Tibial artery (tissue), 4 donors: ENCODE measurements at regions of chr3 and their contacts with region 1.

Region 1: GRCh38 chr3:107235928-107236315 is 141.3 kb upstream of the CCDC54 start:
- DNase-seq: no peak
- H3K4me3 ChIP-seq: peak overlapping the region; percentile 50 to 52
- H3K27ac ChIP-seq: peak overlapping the region; percentile 60
- H3K4me1 ChIP-seq: peaks cover 3 to 27% (median 6%) of the 10 kb centered on the region in 4 donors
- H3K27me3 ChIP-seq: no peaks in the 10 kb centered on the region
- CTCF ChIP-seq: peak; percentile 86 to 95

Region 2: GRCh38 chr3:107429320-107430181 is 193.6 kb after region 1 on chr3:
- intact Hi-C with region 1: loop called (anchors 2 kb)
- DNase-seq: peak; percentile 69 to 89
- H3K4me3 ChIP-seq: peak overlapping the region; percentile 66 to 72
- H3K27ac ChIP-seq: peak overlapping the region; percentile 95
- H3K4me1 ChIP-seq: peaks cover 0 to 10% (median 2%) of the 10 kb centered on the region in 4 donors
- H3K27me3 ChIP-seq: no peaks in the 10 kb centered on the region
- CTCF ChIP-seq: peak; percentile 80 to 92

Region 3: GRCh38 chr3:107740992-107741896 is 505.3 kb after region 1 on chr3:
- intact Hi-C with region 1: loop called (anchors 10 kb)
- DNase-seq: no peak
- H3K4me3 ChIP-seq: no peak overlapping the region
- H3K27ac ChIP-seq: no peak overlapping the region
- H3K4me1 ChIP-seq: no peaks in the 10 kb centered on the region
- H3K27me3 ChIP-seq: no peaks in the 10 kb centered on the region
- CTCF ChIP-seq: peak; percentile 59 to 61